Activated CD8-positive, alpha-beta T cell treated with anti-CD3 and anti-CD28 coated beads, Interleukin-2, amount 10 ng/mL, durations not matched to agents 7 days and 5 days (primary cell): ENCODE measurements at regions of chr4 and their contacts with region 1.

Region 1: GRCh38 chr4:153573881-153574802 is 108.0 kb downstream of the TMEM131L start:
- DNase-seq: peak; percentile 83
- ATAC-seq: peak; percentile 93
- H3K4me3 Mint-ChIP-seq: no peak overlapping the region
- H3K27ac Mint-ChIP-seq: peak overlapping the region; percentile 75
- H3K4me1 Mint-ChIP-seq: peaks cover 64% of the 10 kb centered on the region
- H3K27me3 Mint-ChIP-seq: no peaks in the 10 kb centered on the region

Region 2: DNA sequence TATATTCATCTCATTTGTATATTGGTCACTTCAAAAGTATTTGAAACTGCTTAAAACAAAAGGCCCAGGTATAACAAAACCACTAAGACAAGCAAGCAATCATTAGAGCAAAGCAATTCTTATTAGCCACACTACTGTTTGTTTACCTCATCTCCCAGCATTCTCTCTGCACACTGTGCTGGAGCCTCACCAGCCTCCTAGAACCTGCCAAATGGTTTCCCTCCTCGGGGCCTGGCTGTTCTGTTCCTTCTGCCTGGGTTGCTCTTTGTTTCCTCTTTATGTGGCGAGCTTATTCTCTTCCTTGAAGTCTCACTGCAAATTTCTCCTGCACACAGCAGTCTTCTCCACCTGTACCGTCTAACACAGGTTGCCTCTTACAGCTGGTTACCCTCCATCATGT is 297.2 kb before region 1 on chr4:
- CTCF ChIA-PET with region 1: no interaction called
- POLR2A ChIA-PET with region 1: no interaction called
- DNase-seq: no peak
- ATAC-seq: no peak
- H3K4me3 Mint-ChIP-seq: no peak overlapping the region
- H3K27ac Mint-ChIP-seq: no peak overlapping the region
- H3K4me1 Mint-ChIP-seq: peaks cover 5% of the 10 kb centered on the region
- H3K27me3 Mint-ChIP-seq: peaks cover 12% of the 10 kb centered on the region

Region 3: DNA sequence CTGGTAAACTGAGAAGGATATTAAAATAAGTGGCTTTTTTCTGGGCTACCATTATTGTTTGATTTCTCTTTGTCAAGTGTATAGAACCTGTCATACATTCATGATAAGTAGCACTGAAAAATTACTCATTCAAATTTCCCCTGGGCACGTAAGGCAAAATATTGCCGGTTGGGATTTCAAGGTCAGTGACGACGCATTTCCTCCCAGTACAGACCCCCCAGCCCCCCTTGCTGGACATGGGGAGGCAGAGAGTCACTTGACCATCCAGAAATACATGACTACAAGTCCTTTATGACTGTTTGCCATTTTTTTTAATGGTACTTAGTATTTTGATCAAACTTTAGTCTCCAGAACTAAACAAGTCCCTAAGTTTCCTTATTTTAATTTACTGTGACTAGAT is 236.5 kb before region 1 on chr4:
- CTCF ChIA-PET with region 1: interaction called, 10 read pairs
- POLR2A ChIA-PET with region 1: interaction called, 7 read pairs
- DNase-seq: no peak
- ATAC-seq: no peak
- H3K4me3 Mint-ChIP-seq: no peak overlapping the region
- H3K27ac Mint-ChIP-seq: no peak overlapping the region
- H3K4me1 Mint-ChIP-seq: peaks cover 12% of the 10 kb centered on the region
- H3K27me3 Mint-ChIP-seq: peaks cover 23% of the 10 kb centered on the region

Region 4: GRCh38 chr4:153364997-153365396 is 209.1 kb before region 1 on chr4:
- CTCF ChIA-PET with region 1: no interaction called
- POLR2A ChIA-PET with region 1: no interaction called
- DNase-seq: no peak
- ATAC-seq: no peak
- H3K4me3 Mint-ChIP-seq: no peak overlapping the region
- H3K27ac Mint-ChIP-seq: no peak overlapping the region
- H3K4me1 Mint-ChIP-seq: peaks cover 15% of the 10 kb centered on the region
- H3K27me3 Mint-ChIP-seq: no peaks in the 10 kb centered on the region

Region 5: DNA sequence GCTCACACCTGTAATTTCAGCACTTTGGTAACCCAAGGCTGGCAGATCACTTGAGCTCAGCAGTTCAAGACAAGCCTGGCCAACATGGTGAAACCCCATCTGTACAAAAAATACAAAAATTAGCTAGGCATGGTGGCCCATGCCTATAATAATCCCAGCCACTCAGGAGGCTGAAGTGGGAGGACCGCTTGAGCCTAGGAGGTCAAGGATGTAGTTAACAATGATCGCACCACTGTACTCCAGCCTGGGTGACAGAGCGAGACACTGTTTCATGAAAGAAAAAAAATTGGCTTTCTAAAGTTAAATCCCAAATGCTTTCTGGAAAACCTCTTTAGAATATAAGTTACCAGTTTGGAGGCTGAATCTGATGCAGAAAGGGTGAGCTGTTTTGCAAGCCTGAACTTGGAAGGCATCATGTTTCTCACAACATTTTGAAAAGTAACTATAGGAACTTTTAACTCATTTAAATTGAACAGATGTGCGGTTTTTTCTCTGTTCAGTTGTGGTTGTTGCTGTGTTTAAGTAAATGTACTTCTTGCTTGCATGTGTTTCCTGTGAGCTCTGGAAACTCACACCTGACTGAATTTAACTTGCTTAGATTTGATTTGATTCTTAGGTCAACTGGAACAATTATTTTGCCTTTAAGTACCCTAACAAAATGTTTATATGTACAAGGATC is 147.8 kb before region 1 on chr4:
- CTCF ChIA-PET with region 1: interaction called, 22 read pairs
- POLR2A ChIA-PET with region 1: no interaction called
- DNase-seq: peak; percentile 54
- ATAC-seq: peak; percentile 79
- H3K4me3 Mint-ChIP-seq: peak overlapping the region; percentile 55
- H3K27ac Mint-ChIP-seq: peak overlapping the region; percentile 90
- H3K4me1 Mint-ChIP-seq: peaks cover 72% of the 10 kb centered on the region
- H3K27me3 Mint-ChIP-seq: no peaks in the 10 kb centered on the region

Region 6: GRCh38 chr4:153488006-153488891 is 85.9 kb before region 1 on chr4:
- CTCF ChIA-PET with region 1: interaction called, 14 read pairs
- POLR2A ChIA-PET with region 1: interaction called, 4 read pairs
- DNase-seq: peak; percentile 79
- ATAC-seq: peak; percentile 60
- H3K4me3 Mint-ChIP-seq: peak overlapping the region; percentile 57
- H3K27ac Mint-ChIP-seq: peak overlapping the region; percentile 90
- H3K4me1 Mint-ChIP-seq: peaks cover 85% of the 10 kb centered on the region
- H3K27me3 Mint-ChIP-seq: no peaks in the 10 kb centered on the region

Region 7: DNA sequence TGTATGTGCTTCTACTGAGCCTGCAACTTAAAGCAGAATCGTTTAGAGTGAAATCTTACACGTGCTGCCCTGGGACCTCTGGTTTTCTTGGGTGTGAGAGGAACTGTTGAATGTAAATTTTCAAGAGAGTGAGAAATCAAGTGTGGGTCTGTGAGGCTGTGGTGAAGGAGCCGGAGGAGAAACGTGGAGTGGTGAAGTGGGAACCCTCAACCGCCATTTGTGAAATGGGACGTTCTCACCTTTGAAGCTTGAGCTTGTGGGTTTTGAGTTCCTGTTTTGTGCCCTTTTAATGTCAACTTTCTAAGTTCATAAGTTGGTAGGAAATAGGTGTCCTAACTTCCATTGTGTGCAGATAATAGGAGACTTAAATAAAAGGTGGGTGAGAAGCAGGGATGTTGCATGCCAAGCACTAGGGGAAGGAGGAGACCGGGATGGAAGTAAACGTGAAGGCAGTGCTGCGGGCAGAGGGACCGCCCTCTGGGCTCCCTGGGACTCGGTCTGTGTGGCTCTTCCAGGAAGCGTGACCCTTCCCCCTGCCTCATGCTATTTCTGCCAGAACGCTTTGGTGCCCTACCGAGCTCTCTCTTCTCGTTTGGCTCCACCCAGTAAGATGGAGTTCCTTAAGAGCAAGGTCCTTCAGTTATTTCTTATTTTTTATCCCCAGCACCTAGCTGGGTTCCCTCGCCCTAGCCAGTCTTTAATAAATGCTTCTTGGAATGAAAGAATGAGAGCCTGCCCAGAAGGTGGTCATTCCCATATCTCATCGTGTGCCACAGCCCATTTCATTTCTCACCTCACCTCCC is 51.9 kb before region 1 on chr4:
- CTCF ChIA-PET with region 1: interaction called, 22 read pairs
- POLR2A ChIA-PET with region 1: no interaction called
- DNase-seq: peak; percentile 89
- ATAC-seq: peak; percentile 80
- H3K4me3 Mint-ChIP-seq: peak overlapping the region; percentile 70
- H3K27ac Mint-ChIP-seq: peak overlapping the region; percentile 96
- H3K4me1 Mint-ChIP-seq: peaks cover 95% of the 10 kb centered on the region
- H3K27me3 Mint-ChIP-seq: no peaks in the 10 kb centered on the region

Region 8: DNA sequence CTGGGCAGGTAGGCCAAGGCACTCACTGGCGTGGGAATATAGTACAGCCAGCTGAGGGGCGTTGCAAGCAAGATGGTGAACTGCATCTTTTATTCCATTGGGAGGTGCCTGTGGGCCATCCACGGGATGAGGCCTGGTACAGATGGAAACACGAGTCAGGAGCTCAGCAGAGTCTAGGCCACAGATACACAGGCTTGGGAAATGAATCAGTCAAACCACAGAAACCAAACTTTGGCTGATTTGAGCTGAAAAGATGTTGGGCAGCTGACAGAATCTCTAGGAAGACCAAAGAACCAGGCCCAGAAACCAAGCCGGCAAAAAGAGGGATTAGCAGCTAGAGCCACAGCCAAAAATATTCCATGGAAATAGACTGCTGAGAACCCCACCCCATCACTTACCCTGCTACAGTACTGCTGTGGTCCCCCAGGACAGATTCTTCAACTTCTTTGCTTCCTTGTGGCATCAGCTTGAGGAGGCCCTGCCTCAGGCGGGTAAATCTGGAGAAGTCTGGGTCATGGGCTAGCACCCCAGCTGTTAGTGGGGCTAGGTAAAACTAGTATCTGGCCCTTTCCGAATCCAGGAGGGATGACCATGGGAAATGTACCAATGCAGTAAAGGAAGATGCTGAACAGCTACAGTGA is 32.6 kb before region 1 on chr4:
- CTCF ChIA-PET with region 1: interaction called, 19 read pairs
- POLR2A ChIA-PET with region 1: no interaction called
- DNase-seq: peak; percentile 38
- ATAC-seq: peak; percentile 66
- H3K4me3 Mint-ChIP-seq: no peak overlapping the region
- H3K27ac Mint-ChIP-seq: peak overlapping the region; percentile 27
- H3K4me1 Mint-ChIP-seq: peaks cover 60% of the 10 kb centered on the region
- H3K27me3 Mint-ChIP-seq: no peaks in the 10 kb centered on the region

Region 9: DNA sequence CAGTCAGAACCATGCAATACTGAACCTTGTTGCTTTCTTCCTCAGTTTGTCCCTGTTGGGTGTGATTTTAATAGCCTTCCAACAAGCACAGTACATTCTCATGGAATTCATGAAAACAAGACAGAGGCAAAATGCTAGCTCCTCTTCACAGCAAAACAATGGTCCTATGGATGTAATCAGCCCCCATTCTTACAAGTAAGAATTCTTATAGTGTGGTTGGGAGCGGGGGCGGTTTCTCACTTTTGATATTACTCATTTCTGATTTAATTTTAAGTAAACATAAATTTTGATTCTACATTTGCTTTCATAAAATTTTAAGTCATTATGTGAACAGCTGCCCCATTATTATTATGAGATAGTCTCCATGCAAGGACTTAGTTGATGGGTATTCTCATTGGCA is 29.1 kb after region 1 on chr4:
- CTCF ChIA-PET with region 1: no interaction called
- POLR2A ChIA-PET with region 1: no interaction called
- DNase-seq: no peak
- ATAC-seq: no peak
- H3K4me3 Mint-ChIP-seq: no peak overlapping the region
- H3K27ac Mint-ChIP-seq: no peak overlapping the region
- H3K4me1 Mint-ChIP-seq: peaks cover 8% of the 10 kb centered on the region
- H3K27me3 Mint-ChIP-seq: no peaks in the 10 kb centered on the region

Region 10: GRCh38 chr4:153616006-153616555 is 41.9 kb after region 1 on chr4:
- CTCF ChIA-PET with region 1: no interaction called
- POLR2A ChIA-PET with region 1: no interaction called
- DNase-seq: peak; percentile 46
- ATAC-seq: peak; percentile 64
- H3K4me3 Mint-ChIP-seq: no peak overlapping the region
- H3K27ac Mint-ChIP-seq: no peak overlapping the region
- H3K4me1 Mint-ChIP-seq: peaks cover 38% of the 10 kb centered on the region
- H3K27me3 Mint-ChIP-seq: no peaks in the 10 kb centered on the region

Region 11: GRCh38 chr4:153643406-153644383 is 69.6 kb after region 1 on chr4:
- CTCF ChIA-PET with region 1: interaction called, 12 read pairs
- POLR2A ChIA-PET with region 1: interaction called, 3 read pairs
- DNase-seq: no peak
- ATAC-seq: peak; percentile 89
- H3K4me3 Mint-ChIP-seq: no peak overlapping the region
- H3K27ac Mint-ChIP-seq: peak overlapping the region; percentile 50
- H3K4me1 Mint-ChIP-seq: peaks cover 23% of the 10 kb centered on the region
- H3K27me3 Mint-ChIP-seq: no peaks in the 10 kb centered on the region